ENCODE measurements at regions of chr5 and their contacts with region 1.

Region 1: GRCh38 chr5:43120720-43121564 is at the start of gene ZNF131:
- DNase-seq: peak; percentile 95 to 99 (median 98)
- ATAC-seq: peak; percentile 93
- H3K4me3 ChIP-seq: peak within 1 kb of the TSS; percentile 70
- H3K4me3 Mint-ChIP-seq: peak within 1 kb of the TSS; percentile 89 to 98 (median 96)
- H3K27ac ChIP-seq: peak within 1 kb of the TSS; percentile 97
- H3K27ac Mint-ChIP-seq: peak within 1 kb of the TSS; percentile 86 to 99 (median 96)
- H3K4me1 ChIP-seq: peaks cover 27 to 30% of the 10 kb centered on the region in 2 donors
- H3K4me1 Mint-ChIP-seq: peaks cover 22 to 47% (median 44%) of the 10 kb centered on the region in 7 donors
- H3K27me3 ChIP-seq: no peaks in the 10 kb centered on the region
- H3K27me3 Mint-ChIP-seq: peaks cover 0 to 4% (median 0%) of the 10 kb centered on the region in 5 donors
- total RNA-seq, gene ZNF131: 47.2 to 83.4 (median 67.8) TPM

Region 2: GRCh38 chr5:41869739-41870626 is 1251.0 kb before region 1 on chr5 and contains the start of gene OXCT1:
- CTCF ChIA-PET with region 1: no interaction called
- POLR2A ChIA-PET with region 1: interaction called, 5 read pairs
- intact Hi-C with region 1: loop called in 1 of 2 experiments (anchors 1 kb)
- DNase-seq: peak; percentile 88 to 96 (median 95)
- ATAC-seq: peak; percentile 97
- H3K4me3 ChIP-seq: peak within 1 kb of the TSS; percentile 91
- H3K4me3 Mint-ChIP-seq: peak within 1 kb of the TSS; percentile 85 to 94 (median 90)
- H3K27ac ChIP-seq: peak within 1 kb of the TSS; percentile 97
- H3K27ac Mint-ChIP-seq: peak within 1 kb of the TSS; percentile 89 to 98 (median 97)
- H3K4me1 ChIP-seq: peaks cover 16% of the 10 kb centered on the region in 2 donors
- H3K4me1 Mint-ChIP-seq: peaks cover 18 to 63% (median 57%) of the 10 kb centered on the region in 7 donors
- H3K27me3 ChIP-seq: no peaks in the 10 kb centered on the region
- H3K27me3 Mint-ChIP-seq: no peaks in the 10 kb centered on the region
- total RNA-seq, gene OXCT1: 18.6 to 53.1 (median 30.0) TPM

Region 3: DNA sequence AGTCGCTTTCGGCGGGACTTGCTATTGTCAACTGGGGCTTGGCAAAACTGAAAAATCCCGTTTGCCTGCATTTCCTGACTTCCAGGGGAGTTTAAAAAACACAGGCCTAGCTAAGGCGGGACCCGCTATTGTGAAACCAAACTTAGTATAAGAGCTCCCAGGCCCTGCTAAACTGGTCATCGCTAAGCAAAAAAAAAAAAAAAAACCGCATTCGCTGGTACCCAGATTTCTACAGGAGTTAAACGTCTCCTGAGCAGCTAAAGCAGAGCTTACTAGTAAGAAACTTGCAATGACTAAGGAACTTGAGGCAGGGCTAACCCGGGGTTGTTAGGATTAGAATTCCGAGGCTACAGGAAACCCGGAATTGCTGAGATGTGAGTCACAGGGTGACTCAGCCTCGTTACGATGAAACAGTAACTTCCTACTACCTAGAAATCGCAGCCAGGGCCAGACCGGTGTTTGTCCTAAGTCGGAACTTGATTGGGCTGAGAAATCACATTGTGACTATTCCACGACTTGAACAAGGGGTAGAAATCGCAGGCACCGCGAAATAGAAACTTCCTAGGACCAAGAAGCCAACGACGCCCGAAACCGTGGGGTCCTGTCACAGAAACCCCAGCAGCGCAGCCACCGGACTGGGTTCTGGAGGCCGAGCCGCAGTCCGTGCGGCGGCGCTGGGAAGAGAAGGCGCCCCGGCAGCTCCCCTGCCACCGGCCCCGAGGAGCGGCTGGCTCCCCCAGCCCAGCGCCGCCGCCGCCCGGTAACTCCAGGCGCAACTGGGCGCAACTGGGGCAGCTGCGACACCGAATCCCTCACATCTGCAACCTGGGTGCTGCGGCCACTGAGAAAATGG is 170.3 kb before region 1 on chr5:
- CTCF ChIA-PET with region 1: no interaction called
- POLR2A ChIA-PET with region 1: interaction called, 47 read pairs
- intact Hi-C with region 1: loop called (anchors 1 kb)
- DNase-seq: peak in 8 of 9 donors; percentile 39 to 77 (median 51)
- ATAC-seq: peak; percentile 51
- H3K4me3 ChIP-seq: peak overlapping the region; percentile 80
- H3K4me3 Mint-ChIP-seq: peak overlapping the region; percentile 87 to 99 (median 97)
- H3K27ac ChIP-seq: peak overlapping the region; percentile 98
- H3K27ac Mint-ChIP-seq: peak overlapping the region; percentile 97 to 100 (median 99)
- H3K4me1 ChIP-seq: peaks cover 5 to 22% of the 10 kb centered on the region in 2 donors
- H3K4me1 Mint-ChIP-seq: peaks cover 13 to 51% (median 23%) of the 10 kb centered on the region in 7 donors
- H3K27me3 ChIP-seq: no peaks in the 10 kb centered on the region
- H3K27me3 Mint-ChIP-seq: peaks cover 0 to 9% (median 0%) of the 10 kb centered on the region in 5 donors

Region 4: GRCh38 chr5:43040287-43041098 is 80.4 kb before region 1 on chr5 and contains the start of gene ANXA2R:
- CTCF ChIA-PET with region 1: interaction called, 15 read pairs
- POLR2A ChIA-PET with region 1: interaction called, 90 read pairs
- intact Hi-C with region 1: loop called (anchors 1 kb)
- DNase-seq: peak; percentile 76 to 98 (median 96)
- ATAC-seq: peak; percentile 72
- H3K4me3 ChIP-seq: peak within 1 kb of the TSS; percentile 73
- H3K4me3 Mint-ChIP-seq: peak within 1 kb of the TSS; percentile 82 to 99 (median 98)
- H3K27ac ChIP-seq: peak within 1 kb of the TSS; percentile 96
- H3K27ac Mint-ChIP-seq: peak within 1 kb of the TSS; percentile 93 to 100 (median 99)
- H3K4me1 ChIP-seq: peaks cover 17 to 31% of the 10 kb centered on the region in 2 donors
- H3K4me1 Mint-ChIP-seq: peaks cover 14 to 75% (median 45%) of the 10 kb centered on the region in 7 donors
- H3K27me3 ChIP-seq: no peaks in the 10 kb centered on the region
- H3K27me3 Mint-ChIP-seq: no peaks in the 10 kb centered on the region
- total RNA-seq, gene ANXA2R: 13.2 to 61.4 (median 42.0) TPM

Region 5: DNA sequence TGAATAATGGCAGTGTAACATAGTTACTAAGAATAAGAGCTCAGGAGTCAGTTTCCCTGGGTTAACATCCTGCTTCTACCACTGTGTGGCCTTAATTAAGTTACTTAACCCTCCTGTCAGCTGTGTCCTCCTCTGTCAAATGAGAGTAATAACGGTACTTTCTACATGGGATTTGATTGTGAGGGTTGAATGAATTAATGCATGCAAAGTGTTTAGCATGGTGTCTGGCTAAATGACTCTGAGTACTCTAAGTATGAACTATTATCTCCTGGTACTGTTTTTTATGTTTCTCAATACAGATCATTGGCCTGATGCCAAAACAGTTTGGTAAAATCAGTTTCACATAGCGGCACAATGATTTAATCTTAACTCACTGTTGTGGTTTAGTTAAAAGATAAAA is 19.3 kb after region 1 on chr5:
- CTCF ChIA-PET with region 1: interaction called, 4 read pairs
- POLR2A ChIA-PET with region 1: interaction called, 15 read pairs
- intact Hi-C with region 1: no loop called
- DNase-seq: peak in 5 of 9 donors; percentile 22 to 44 (median 35)
- ATAC-seq: peak; percentile 34
- H3K4me3 ChIP-seq: no peak overlapping the region
- H3K4me3 Mint-ChIP-seq: peak overlapping the region in 7 of 10 donors; percentile 1 to 52 (median 37)
- H3K27ac ChIP-seq: no peak overlapping the region
- H3K27ac Mint-ChIP-seq: peak overlapping the region in 8 of 9 donors; percentile 39 to 78 (median 66)
- H3K4me1 ChIP-seq: peaks cover 9 to 22% of the 10 kb centered on the region in 2 donors
- H3K4me1 Mint-ChIP-seq: peaks cover 27 to 66% (median 53%) of the 10 kb centered on the region in 7 donors
- H3K27me3 ChIP-seq: no peaks in the 10 kb centered on the region
- H3K27me3 Mint-ChIP-seq: no peaks in the 10 kb centered on the region

Region 6: DNA sequence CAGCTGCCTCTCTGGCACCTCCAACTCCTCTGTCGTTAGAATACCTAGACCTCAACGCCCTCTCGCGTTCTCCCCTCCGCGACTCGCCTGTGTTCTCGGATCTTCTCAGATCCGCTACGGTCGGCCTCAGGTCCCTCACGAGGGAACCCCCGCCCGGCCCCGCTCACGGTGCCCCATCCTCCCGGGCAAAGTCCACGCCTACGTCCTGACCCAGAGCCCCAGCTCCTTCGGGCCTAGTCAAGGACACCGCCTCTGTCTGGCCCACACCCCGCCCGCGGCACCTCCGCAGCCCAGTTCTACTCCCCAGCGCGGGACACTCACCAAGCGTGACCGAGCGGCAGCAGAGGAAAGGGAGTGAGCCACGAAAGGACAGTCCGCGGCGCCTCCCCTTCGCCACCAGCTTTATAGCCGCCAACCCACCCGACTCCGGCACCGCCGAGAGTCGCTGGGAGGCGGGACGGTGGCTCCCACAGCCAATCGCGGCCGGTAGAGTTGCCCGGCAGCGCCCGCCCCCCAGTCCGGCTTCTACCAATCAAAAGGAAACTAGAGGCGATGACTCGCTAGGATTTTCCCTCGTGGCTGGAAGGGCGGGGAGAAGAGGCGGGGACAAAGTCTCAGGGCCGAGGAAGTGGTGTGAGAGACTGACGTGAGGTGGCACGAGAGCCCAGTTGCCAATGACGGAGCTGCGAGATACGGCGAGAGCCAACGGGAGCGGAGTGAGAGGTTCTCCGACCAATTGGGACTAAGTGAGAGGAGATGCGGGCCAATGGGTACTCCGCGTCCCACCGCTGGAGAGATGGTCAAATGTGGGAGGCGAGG is 192.3 kb after region 1 on chr5 and contains the start of gene HMGCS1:
- CTCF ChIA-PET with region 1: interaction called, 3 read pairs
- POLR2A ChIA-PET with region 1: interaction called, 44 read pairs
- intact Hi-C with region 1: loop called (anchors 1 kb)
- DNase-seq: peak; percentile 94 to 99 (median 99)
- ATAC-seq: peak; percentile 93
- H3K4me3 ChIP-seq: peak within 1 kb of the TSS; percentile 89
- H3K4me3 Mint-ChIP-seq: peak within 1 kb of the TSS; percentile 82 to 99 (median 94)
- H3K27ac ChIP-seq: peak within 1 kb of the TSS; percentile 95
- H3K27ac Mint-ChIP-seq: peak within 1 kb of the TSS; percentile 81 to 98 (median 94)
- H3K4me1 ChIP-seq: peaks cover 9 to 12% of the 10 kb centered on the region in 2 donors
- H3K4me1 Mint-ChIP-seq: peaks cover 19 to 63% (median 39%) of the 10 kb centered on the region in 7 donors
- H3K27me3 ChIP-seq: no peaks in the 10 kb centered on the region
- H3K27me3 Mint-ChIP-seq: peaks cover 0 to 2% (median 0%) of the 10 kb centered on the region in 5 donors
- total RNA-seq, gene HMGCS1: 32.2 to 77.5 (median 48.2) TPM

Region 7: DNA sequence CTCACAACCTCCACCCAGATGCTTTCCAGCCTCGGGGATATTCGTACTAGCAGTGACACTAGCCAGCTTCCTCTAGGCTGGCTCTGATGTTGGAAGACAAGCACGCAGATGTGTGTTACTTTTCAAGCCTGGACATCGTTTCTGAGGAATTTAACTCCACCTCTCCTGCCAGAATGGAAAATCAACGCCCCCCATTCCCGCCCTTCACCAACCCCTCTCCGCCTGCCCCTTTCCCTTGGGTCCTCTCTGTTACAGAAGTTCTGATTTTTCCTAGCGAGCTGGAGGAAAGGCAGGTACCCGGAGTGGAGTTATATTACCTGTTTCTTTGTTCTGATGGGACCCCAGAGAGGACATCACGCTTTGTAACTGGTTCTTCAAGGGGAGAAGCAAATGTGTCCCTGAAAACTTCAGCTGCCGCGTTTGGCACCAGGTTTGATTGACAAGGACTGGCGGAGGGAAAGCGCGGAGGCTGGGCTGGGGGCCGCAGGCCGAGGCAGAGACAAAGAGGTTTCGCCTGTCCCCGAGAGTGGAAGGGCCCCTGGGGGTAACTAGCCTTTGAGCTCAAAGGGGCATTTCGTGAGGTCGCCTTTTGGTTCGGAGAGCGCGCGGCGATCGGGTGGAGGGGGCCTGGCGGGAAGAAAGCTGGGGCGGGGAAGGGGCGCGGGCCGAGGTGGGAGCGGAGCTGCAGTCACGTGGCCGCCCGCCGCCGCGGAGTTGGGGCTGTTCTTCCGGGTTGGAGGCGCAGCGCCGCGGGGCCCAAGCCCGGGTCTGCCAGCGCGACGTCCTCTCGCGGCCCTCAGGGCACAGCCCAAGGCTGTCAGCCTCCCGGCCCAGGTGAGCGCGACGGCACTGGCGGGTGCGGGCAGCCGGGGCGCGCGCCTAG is 481.8 kb after region 1 on chr5 and contains the start of gene NNT:
- CTCF ChIA-PET with region 1: no interaction called
- POLR2A ChIA-PET with region 1: interaction called, 4 read pairs
- intact Hi-C with region 1: loop called (anchors 2 to 5 kb)
- DNase-seq: peak; percentile 71 to 85 (median 78)
- ATAC-seq: peak; percentile 85
- H3K4me3 ChIP-seq: peak within 1 kb of the TSS; percentile 78
- H3K4me3 Mint-ChIP-seq: peak within 1 kb of the TSS; percentile 90 to 99 (median 94)
- H3K27ac ChIP-seq: peak within 1 kb of the TSS; percentile 87
- H3K27ac Mint-ChIP-seq: peak within 1 kb of the TSS; percentile 86 to 98 (median 93)
- H3K4me1 ChIP-seq: peaks cover 6 to 14% of the 10 kb centered on the region in 2 donors
- H3K4me1 Mint-ChIP-seq: peaks cover 26 to 72% (median 60%) of the 10 kb centered on the region in 7 donors
- H3K27me3 ChIP-seq: no peaks in the 10 kb centered on the region
- H3K27me3 Mint-ChIP-seq: no peaks in the 10 kb centered on the region
- total RNA-seq, gene NNT: 42.5 to 73.5 (median 60.7) TPM